ENCODE measurements at regions of chr14 and their contacts with region 1.

Region 1: DNA sequence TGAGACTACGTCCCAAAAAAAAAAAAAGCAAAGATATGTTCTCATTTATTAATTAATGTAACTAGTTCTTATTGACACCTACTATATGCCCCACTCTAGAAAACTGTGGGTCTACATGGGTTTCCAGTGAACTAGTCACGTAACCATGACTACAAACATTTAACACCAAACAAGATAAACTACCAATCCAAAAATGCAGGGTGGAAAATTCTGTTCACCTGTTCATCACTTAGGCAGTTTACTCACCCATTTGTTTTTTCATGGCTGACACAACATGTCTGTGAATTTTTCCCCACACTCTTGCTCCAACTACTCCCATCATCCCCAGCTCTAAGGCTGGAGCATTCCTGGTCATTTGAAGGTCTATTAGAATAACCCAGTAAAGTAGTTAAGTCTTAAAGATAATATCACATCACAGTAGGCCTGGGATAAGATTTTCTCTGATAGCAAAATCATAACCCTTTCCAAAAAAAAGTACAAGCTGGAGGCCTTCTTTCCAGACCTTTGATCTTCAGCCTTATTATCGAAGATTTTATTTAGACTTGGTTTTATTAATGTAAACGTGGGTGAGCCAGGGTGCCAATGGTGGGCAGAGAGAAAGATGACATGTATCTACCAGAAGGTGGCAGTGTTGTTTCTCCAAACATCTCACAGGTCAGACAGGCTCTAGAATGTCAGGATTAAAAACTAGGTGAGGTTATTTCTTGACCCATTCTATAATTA is 61.6 kb upstream of the DAAM1 start:
- DNase-seq: no peak
- H3K4me3 Mint-ChIP-seq: no peak overlapping the region
- H3K27ac Mint-ChIP-seq: no peak overlapping the region
- H3K4me1 Mint-ChIP-seq: no peaks in the 10 kb centered on the region
- H3K27me3 Mint-ChIP-seq: peaks cover 15% of the 10 kb centered on the region

Region 2: GRCh38 chr14:58501214-58501816 is 625.6 kb before region 1 on chr14:
- intact Hi-C with region 1: loop called (anchors 5 kb)
- DNase-seq: no peak
- H3K4me3 Mint-ChIP-seq: no peak overlapping the region
- H3K27ac Mint-ChIP-seq: no peak overlapping the region
- H3K4me1 Mint-ChIP-seq: no peaks in the 10 kb centered on the region
- H3K27me3 Mint-ChIP-seq: no peaks in the 10 kb centered on the region

Region 3: GRCh38 chr14:59439256-59439965 is 312.5 kb after region 1 on chr14:
- intact Hi-C with region 1: loop called (anchors 1 kb)
- DNase-seq: no peak
- H3K4me3 Mint-ChIP-seq: no peak overlapping the region
- H3K27ac Mint-ChIP-seq: no peak overlapping the region
- H3K4me1 Mint-ChIP-seq: no peaks in the 10 kb centered on the region
- H3K27me3 Mint-ChIP-seq: peaks cover 2% of the 10 kb centered on the region

Region 4: DNA sequence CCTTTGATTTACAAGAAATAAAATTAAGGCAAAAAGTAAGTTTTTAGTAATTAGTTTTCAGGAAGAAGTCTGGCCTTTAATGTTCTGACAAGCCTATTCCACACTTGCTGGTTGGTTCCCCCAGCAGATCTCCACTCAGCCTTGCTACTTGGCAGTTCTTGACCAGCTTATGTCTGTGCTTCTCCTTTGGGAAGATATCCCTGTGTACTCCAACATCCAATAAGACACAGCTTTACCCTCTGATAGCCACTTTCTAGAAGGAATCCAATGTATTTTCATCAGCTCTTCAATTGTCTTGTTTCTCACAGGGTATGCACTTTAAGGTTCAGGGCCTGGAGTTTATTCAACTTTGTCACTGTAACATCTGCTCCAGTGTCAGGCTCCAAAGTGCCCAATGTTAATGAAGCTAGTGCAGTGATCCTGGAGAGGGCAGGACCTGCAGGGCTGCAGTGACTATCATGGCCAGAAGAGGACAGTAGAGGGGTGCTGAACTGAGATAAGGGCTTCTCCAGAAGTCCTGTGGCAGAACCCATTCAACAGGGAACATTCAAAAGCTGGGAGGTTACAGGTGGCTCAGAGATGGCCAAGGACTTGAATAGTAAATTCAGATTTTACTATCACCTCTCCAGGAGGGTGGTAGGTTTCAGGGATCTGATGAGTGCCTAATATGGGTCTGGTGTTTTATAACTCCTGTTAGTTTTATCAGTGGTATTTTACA is 380.4 kb after region 1 on chr14:
- intact Hi-C with region 1: loop called (anchors 5 kb)
- DNase-seq: peak; percentile 33
- H3K4me3 Mint-ChIP-seq: no peak overlapping the region
- H3K27ac Mint-ChIP-seq: no peak overlapping the region
- H3K4me1 Mint-ChIP-seq: peaks cover 4% of the 10 kb centered on the region
- H3K27me3 Mint-ChIP-seq: peaks cover 9% of the 10 kb centered on the region

Region 5: DNA sequence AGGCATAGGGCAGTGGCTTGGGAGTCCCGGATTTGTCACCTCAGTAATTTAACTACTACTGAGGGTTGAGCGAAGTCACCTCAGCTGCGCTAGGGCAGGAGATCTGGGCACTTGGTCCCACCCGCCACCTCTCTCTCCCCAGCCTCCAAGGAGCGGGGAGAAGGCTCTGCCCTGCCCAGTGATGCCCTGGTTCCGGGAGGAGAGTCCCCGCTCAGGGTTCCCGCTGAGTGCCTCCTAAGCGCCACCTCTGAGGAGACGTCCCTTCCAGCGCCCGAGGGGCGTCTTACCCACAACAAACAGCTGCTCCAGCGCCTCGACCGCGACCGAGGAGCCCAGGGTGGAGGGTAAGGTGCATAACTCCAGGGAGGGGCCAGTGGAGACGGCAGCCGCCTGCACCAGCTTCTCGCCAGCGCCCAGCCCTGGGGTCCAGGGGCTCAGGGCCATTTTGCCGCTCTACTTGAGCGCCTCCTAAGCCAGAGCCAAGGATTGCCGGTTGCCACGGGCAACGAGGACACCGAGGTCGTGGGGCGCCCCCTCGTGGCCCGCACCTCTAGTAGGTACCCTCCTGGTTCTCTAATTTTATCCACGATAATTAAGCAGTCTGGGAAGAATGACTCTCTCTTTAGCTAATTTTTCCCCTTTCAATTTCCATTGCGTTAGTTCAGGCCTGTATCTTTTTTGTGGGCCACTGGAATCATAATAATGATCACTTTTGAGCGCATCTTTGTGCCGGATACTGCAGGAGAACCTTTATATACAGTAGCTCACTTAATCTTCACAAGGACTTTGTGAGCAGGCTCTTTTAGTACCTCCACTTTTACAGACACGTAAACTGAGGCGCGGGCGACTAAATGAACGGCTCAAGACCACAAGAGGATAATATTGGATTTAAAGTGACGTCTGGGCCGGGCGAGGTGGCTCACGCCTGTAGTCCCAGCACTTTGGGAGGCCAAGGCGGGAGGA is 449.7 kb after region 1 on chr14 and contains the start of gene CCDC175:
- intact Hi-C with region 1: loop called (anchors 2 kb)
- DNase-seq: peak; percentile 71
- H3K4me3 Mint-ChIP-seq: peak within 1 kb of the TSS; percentile 70
- H3K27ac Mint-ChIP-seq: no peak within 1 kb of the TSS
- H3K4me1 Mint-ChIP-seq: peaks cover 7% of the 10 kb centered on the region
- H3K27me3 Mint-ChIP-seq: peaks cover 23% of the 10 kb centered on the region
- total RNA-seq, gene CCDC175: not detected in 2 replicates

Measured in activated T-helper 2 cell treated with anti-CD3 and anti-CD28 coated beads, Interferon-gamma antibody, Interleukin-2, Interleukin-4, amounts not matched to agents 10 μg/mL and 5 μg/mL and 100 μg/mL, durations not matched to agents 14 hours and 24 hours and 36 hours (primary cell).